Mammary epithelial cell (primary cell): ENCODE measurements at regions of chr7 and their contacts with region 1.

Region 1: GRCh38 chr7:157432957-157433576 is 96.3 kb downstream of the DNAJB6 start:
- DNase-seq: no peak
- H3K4me3 ChIP-seq: peak overlapping the region; percentile 2 to 24 (median 6)
- H3K27ac ChIP-seq: no peak overlapping the region
- H3K4me1 ChIP-seq: no peaks in the 10 kb centered on the region
- H3K27me3 ChIP-seq: no peaks in the 10 kb centered on the region
- CTCF ChIP-seq: peak; percentile 62 to 65

Region 2: GRCh38 chr7:156773966-156774365 is 659.1 kb before region 1 on chr7:
- CTCF ChIA-PET with region 1: no interaction called
- dilution Hi-C with region 1: no loop called
- in situ Hi-C with region 1: no loop called
- intact Hi-C with region 1: no loop called
- DNase-seq: peak; percentile 12
- H3K4me3 ChIP-seq: no peak overlapping the region
- H3K27ac ChIP-seq: no peak overlapping the region
- H3K4me1 ChIP-seq: peaks cover 8% of the 10 kb centered on the region
- H3K27me3 ChIP-seq: no peaks in the 10 kb centered on the region
- CTCF ChIP-seq: no peak

Region 3: GRCh38 chr7:158325530-158326381 is 892.7 kb after region 1 on chr7:
- CTCF ChIA-PET with region 1: no interaction called
- dilution Hi-C with region 1: no loop called
- in situ Hi-C with region 1: no loop called
- intact Hi-C with region 1: loop called (anchors 5 kb)
- DNase-seq: no peak
- H3K4me3 ChIP-seq: no peak overlapping the region
- H3K27ac ChIP-seq: no peak overlapping the region
- H3K4me1 ChIP-seq: no peaks in the 10 kb centered on the region
- H3K27me3 ChIP-seq: no peaks in the 10 kb centered on the region
- CTCF ChIP-seq: no peak

Region 4: DNA sequence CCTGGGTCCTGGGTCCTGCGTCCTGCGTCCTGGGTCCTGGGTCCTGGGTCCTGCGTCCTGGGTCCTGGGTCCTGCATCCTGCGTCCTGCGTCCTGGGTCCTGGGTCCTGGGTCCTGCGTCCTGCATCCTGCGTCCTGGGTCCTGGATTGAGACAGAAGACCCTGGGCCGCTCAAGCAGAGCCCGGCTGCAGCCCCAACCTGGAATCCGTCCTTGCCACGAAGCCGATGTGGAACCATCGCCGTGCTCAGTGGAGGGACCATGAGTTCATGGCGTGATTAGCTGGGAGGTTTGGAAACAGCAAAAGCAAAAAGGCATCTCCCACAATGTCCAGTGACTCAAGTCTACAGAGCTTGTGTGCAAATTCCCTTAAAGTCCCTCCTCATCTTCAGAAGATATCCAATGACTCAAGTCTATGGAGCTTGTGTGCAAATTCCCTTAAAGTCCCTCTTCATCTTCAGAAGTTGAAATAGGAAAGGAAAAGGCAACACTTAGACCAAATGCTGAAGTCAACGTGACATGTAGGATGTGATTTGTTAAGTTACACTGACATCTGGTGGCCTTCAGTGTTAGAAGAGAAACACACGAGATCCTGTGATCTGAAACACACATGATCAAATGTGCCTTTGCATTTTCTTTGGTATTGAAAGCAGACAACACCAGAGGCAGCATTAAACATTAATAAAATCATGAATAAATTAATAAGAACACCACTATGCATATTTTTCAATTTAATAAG is 974.7 kb after region 1 on chr7:
- CTCF ChIA-PET with region 1: no interaction called
- dilution Hi-C with region 1: no loop called
- in situ Hi-C with region 1: no loop called
- intact Hi-C with region 1: loop called (anchors 10 kb)
- DNase-seq: peak; percentile 11
- H3K4me3 ChIP-seq: no peak overlapping the region
- H3K27ac ChIP-seq: no peak overlapping the region
- H3K4me1 ChIP-seq: no peaks in the 10 kb centered on the region
- H3K27me3 ChIP-seq: no peaks in the 10 kb centered on the region
- CTCF ChIP-seq: peak; percentile 23 to 40